SK-N-SH (cell line): ENCODE measurements at regions of chr1 and their contacts with region 1.

Region 1: GRCh38 chr1:229258031-229258756 is 12.7 kb upstream of the RAB4A start:
- DNase-seq: peak; percentile 69
- H3K4me3 ChIP-seq: no peak overlapping the region
- H3K27ac ChIP-seq: no peak overlapping the region
- H3K4me1 ChIP-seq: peaks cover 0 to 5% of the 10 kb centered on the region in 2 experiments; a peak in 2 of 4 replicates
- H3K27me3 ChIP-seq: no peaks in the 10 kb centered on the region
- CTCF ChIP-seq: peak; percentile 90
- EP300 ChIP-seq: no peak
- RAD21 ChIP-seq: peak; percentile 96

Region 2: DNA sequence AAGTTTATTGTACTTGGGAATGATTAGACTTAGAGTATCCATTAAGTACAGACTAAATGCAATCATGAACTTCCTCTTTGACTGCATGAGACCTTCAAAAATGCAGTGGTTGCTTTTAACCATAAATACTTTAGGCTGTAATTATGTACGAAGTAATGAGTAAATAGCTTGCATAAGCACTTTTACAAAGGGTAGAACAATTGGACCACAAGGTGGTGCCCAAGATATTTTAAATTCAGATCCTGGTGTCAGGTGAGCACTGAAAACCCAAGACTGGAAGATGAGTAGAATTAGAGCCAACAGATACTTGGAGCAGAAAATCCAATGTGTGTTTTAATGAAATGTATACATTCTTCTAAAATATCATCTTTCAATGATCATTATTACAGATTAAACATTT is 566.3 kb before region 1 on chr1:
- CTCF ChIA-PET with region 1: interaction called, 31 read pairs
- POLR2A ChIA-PET with region 1: no interaction called
- DNase-seq: peak; percentile 45
- H3K4me3 ChIP-seq: no peak overlapping the region
- H3K27ac ChIP-seq: no peak overlapping the region
- H3K4me1 ChIP-seq: no peaks in the 10 kb centered on the region
- H3K27me3 ChIP-seq: no peaks in the 10 kb centered on the region
- CTCF ChIP-seq: peak; percentile 53
- EP300 ChIP-seq: no peak
- RAD21 ChIP-seq: peak; percentile 79

Region 3: DNA sequence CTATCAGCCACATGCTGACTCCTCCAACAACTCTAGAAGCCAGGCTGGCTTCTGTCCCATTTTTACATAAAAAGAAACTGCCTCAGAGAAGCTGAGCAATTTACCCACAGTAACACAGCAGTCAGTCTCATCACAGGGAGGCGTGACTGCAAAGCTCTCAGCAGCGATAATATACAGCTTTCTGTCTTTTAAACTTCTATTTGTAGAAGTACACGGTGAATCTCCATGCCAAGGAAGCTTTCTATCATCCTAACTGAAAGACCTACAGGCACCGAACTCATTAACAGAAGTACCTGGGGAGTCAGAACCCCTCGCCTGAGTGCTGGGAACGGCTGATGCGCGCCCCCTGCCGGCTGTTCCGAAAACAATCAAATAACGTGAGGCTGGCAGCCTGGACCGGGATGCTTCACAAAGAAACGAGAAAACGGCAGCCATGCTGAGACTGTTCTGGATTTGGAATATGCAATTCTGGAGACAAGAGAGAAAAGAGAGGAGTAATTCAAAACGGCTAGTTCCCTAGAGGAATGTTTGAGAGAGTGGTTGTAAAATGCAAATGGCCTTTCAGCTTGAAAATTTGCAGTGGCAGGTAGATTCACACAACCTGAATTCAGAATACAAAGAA is 30.8 kb before region 1 on chr1:
- CTCF ChIA-PET with region 1: interaction called, 26 read pairs
- POLR2A ChIA-PET with region 1: no interaction called
- DNase-seq: peak; percentile 87
- H3K4me3 ChIP-seq: peak overlapping the region in 1 of 2 experiments; percentile 38; a peak in 1 of 4 replicates
- H3K27ac ChIP-seq: no peak overlapping the region
- H3K4me1 ChIP-seq: peaks cover 6 to 7% of the 10 kb centered on the region in 2 experiments; a peak in 3 of 4 replicates
- H3K27me3 ChIP-seq: peaks cover 6% of the 10 kb centered on the region; the same call in 1 of the 2 replicates
- CTCF ChIP-seq: peak; percentile 95
- EP300 ChIP-seq: no peak
- RAD21 ChIP-seq: peak; percentile 95

Region 4: DNA sequence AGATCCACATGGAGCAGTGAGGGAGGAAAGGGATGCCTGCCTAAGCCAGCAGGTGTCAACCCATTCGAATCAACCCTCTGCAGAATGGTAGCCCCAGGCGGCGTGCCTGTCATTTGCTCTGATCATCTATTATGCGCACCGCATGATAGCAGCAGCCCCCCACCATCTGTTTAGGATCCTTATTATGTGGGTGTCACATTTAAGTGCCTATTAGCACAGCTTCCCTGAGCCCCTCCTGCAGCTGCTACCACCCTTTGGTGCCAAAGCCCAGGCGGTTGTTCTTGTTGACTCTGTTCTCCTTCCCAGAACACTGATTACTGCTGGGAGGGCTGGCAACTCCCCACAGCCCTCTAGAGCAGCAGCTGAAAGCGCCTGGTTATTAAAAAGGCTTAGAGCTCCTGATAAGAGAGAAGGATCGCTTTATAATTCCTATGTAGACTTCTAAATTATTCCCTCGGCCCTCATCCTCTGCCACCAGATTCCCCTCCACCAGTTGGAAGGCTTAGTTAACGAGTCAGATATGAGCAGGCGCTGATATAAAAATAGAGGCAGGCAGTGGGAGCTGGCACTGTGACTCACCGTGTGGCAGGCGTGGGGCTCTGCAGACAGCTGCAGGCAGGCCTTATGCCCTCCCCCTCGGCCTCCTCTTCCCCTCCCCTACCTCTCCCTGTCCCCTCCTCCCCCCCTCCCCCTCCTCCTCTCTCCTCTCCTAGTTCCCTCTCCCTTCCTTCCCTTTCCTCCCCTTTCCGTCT is 152.7 kb after region 1 on chr1:
- CTCF ChIA-PET with region 1: interaction called, 12 read pairs
- POLR2A ChIA-PET with region 1: interaction called, 3 read pairs
- DNase-seq: peak; percentile 86
- H3K4me3 ChIP-seq: peak overlapping the region in 1 of 2 experiments; percentile 12; a peak in 2 of 4 replicates
- H3K27ac ChIP-seq: peak overlapping the region; percentile 46 to 95
- H3K4me1 ChIP-seq: peaks cover 10 to 43% of the 10 kb centered on the region in 2 experiments
- H3K27me3 ChIP-seq: no peaks in the 10 kb centered on the region
- CTCF ChIP-seq: no peak
- EP300 ChIP-seq: no peak; a peak in 1 of 4 replicates
- RAD21 ChIP-seq: no peak; the same call in none of the 2 replicates

Region 5: DNA sequence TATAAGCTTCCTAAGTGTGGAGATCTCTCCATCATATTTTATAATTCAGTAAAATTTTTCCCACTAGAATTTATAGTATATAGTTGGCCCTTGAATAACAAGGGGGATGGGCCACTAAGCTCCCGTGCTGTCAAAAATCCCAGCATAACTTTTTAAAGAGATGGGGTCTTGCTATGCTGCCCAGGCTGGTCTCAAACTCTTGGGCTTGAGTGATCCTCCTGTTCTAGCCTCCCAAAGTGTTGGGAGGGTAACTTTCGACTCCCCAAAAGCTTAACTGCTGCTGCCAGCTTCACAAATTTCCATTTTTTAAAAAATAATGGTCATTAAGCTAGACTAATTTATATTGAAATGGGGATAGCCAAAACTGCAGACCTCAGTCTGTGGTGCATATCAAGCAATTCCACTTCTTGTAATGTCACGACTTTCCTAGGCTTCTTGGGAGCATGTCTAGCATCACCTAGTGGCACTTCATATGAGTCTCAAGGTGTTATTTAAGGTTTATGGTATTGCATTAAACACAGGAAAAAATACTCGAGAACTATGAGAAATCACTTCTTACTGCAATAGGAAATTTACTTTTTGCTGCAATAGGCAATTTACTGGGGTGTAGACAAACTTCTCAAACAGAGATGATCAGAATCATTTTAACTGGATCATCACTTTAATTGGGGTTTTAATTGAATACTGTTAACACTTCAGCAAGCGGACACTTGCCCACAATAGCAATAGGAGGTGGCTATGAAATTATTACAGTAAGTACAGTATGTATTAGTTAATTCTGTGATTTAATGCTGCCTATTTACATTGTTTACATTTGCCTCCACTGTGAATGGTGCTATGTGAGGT is 195.0 kb after region 1 on chr1:
- CTCF ChIA-PET with region 1: interaction called, 13 read pairs
- POLR2A ChIA-PET with region 1: no interaction called
- DNase-seq: no peak
- H3K4me3 ChIP-seq: no peak overlapping the region
- H3K27ac ChIP-seq: no peak overlapping the region
- H3K4me1 ChIP-seq: no peaks in the 10 kb centered on the region
- H3K27me3 ChIP-seq: no peaks in the 10 kb centered on the region
- CTCF ChIP-seq: peak; percentile 69
- EP300 ChIP-seq: no peak
- RAD21 ChIP-seq: peak; percentile 69

Region 6: DNA sequence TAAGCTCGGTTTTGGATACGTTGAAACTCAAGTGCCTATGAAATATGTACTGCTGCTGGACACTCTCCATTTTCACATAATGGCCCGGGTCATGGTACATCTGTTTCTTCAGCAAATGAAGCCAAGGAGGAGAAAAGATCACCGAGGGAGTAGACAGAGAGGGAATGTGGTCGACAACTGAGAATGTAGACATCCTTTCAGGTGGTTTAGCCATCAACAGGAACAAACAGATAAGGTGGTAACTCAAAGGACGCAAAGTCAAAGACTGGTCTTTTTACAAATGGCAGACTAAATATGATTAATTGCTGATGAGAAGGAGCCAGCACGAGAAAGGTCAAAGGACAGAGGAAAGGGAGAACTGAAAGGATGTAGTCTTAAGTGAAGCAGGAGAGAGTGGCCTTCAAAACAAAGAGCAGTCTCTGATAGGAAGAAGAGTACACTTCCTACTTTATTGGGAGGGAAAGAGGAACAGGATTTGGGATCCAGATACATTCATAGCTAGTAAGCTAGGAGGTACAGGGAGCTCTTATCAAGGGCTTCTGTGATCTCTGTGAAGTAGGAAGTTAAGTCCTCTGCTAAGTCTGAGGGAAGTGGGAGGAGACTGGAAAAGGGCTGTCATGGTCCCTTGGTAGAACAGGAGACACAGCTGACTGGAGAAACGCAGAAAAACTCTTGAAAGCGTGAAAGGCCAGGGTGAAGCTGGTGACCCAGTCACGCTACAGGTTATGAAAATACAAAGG is 221.6 kb after region 1 on chr1:
- CTCF ChIA-PET with region 1: interaction called, 143 read pairs
- POLR2A ChIA-PET with region 1: interaction called, 3 read pairs
- DNase-seq: no peak
- H3K4me3 ChIP-seq: 0 out of 4 replicates have a peak overlapping the region, but pooled peaks of 1 of the 2 experiments have one; percentile 5
- H3K27ac ChIP-seq: no peak overlapping the region
- H3K4me1 ChIP-seq: peaks cover 0 to 7% of the 10 kb centered on the region in 2 experiments; a peak in 1 of 4 replicates
- H3K27me3 ChIP-seq: no peaks in the 10 kb centered on the region
- CTCF ChIP-seq: no peak
- EP300 ChIP-seq: no peak
- RAD21 ChIP-seq: no peak

Region 7: DNA sequence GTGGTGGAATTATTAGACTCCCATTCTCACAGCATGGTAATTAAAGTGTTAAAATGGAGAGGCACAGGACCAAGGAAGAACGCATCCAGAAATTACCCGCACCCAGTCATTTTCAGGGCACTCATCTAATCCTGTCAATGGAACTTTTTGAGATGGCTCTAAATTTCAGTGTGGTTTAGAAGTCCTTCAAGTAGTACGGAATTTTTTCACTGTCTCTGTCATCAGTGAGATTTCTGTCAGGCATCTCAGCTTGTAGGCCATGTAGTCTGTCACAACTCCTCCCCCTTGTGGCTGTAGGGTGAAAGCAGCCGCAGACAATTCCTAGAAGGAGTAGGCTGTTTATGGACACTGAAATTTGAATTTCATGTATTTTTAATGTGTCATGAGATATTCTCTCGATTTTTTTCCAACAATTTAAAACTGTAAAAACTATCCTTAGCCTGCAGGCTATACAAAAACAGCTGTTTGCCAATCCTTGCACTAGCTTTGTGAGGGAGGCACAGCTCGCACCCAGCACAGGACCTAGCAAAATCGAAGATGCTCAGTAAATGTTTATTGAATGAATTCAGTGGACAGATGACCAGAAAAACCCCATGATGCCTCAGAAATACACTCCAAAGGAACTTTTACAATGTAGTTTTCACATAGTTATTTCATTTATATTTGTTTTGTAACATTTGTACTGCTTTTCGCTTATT is 256.5 kb after region 1 on chr1:
- CTCF ChIA-PET with region 1: interaction called, 61 read pairs
- POLR2A ChIA-PET with region 1: no interaction called
- DNase-seq: peak; percentile 66
- H3K4me3 ChIP-seq: peak overlapping the region in 1 of 2 experiments; percentile 21; a peak in 1 of 4 replicates
- H3K27ac ChIP-seq: no peak overlapping the region
- H3K4me1 ChIP-seq: no peaks in the 10 kb centered on the region; a peak in 1 of 4 replicates
- H3K27me3 ChIP-seq: no peaks in the 10 kb centered on the region
- CTCF ChIP-seq: peak; percentile 87
- EP300 ChIP-seq: no peak
- RAD21 ChIP-seq: peak; percentile 76